ENCODE measurements at regions of chr9 and their contacts with region 1.

Region 1: GRCh38 chr9:130461218-130461630 is 16.5 kb downstream of the ASS1 start:
- DNase-seq: peak; percentile 25 to 79 (median 62)
- ATAC-seq: peak; percentile 75
- H3K4me3 ChIP-seq: no peak overlapping the region
- H3K4me3 Mint-ChIP-seq: no peak overlapping the region
- H3K27ac ChIP-seq: no peak overlapping the region
- H3K27ac Mint-ChIP-seq: no peak overlapping the region
- H3K4me1 ChIP-seq: no peaks in the 10 kb centered on the region
- H3K4me1 Mint-ChIP-seq: peaks cover 0 to 1% (median 0%) of the 10 kb centered on the region in 7 donors
- H3K27me3 ChIP-seq: peaks cover 0 to 4% of the 10 kb centered on the region in 2 donors
- H3K27me3 Mint-ChIP-seq: peaks cover 7 to 33% (median 14%) of the 10 kb centered on the region in 5 donors

Region 2: GRCh38 chr9:129365196-129365595 is 1096.0 kb before region 1 on chr9:
- CTCF ChIA-PET with region 1: no interaction called
- POLR2A ChIA-PET with region 1: no interaction called
- intact Hi-C with region 1: no loop called
- DNase-seq: no peak
- ATAC-seq: no peak
- H3K4me3 ChIP-seq: no peak overlapping the region
- H3K4me3 Mint-ChIP-seq: no peak overlapping the region
- H3K27ac ChIP-seq: no peak overlapping the region
- H3K27ac Mint-ChIP-seq: no peak overlapping the region
- H3K4me1 ChIP-seq: no peaks in the 10 kb centered on the region
- H3K4me1 Mint-ChIP-seq: peaks cover 0 to under 1% (median 0%) of the 10 kb centered on the region in 7 donors
- H3K27me3 ChIP-seq: no peaks in the 10 kb centered on the region
- H3K27me3 Mint-ChIP-seq: peaks cover 0 to 15% (median 0%) of the 10 kb centered on the region in 5 donors

Region 3: DNA sequence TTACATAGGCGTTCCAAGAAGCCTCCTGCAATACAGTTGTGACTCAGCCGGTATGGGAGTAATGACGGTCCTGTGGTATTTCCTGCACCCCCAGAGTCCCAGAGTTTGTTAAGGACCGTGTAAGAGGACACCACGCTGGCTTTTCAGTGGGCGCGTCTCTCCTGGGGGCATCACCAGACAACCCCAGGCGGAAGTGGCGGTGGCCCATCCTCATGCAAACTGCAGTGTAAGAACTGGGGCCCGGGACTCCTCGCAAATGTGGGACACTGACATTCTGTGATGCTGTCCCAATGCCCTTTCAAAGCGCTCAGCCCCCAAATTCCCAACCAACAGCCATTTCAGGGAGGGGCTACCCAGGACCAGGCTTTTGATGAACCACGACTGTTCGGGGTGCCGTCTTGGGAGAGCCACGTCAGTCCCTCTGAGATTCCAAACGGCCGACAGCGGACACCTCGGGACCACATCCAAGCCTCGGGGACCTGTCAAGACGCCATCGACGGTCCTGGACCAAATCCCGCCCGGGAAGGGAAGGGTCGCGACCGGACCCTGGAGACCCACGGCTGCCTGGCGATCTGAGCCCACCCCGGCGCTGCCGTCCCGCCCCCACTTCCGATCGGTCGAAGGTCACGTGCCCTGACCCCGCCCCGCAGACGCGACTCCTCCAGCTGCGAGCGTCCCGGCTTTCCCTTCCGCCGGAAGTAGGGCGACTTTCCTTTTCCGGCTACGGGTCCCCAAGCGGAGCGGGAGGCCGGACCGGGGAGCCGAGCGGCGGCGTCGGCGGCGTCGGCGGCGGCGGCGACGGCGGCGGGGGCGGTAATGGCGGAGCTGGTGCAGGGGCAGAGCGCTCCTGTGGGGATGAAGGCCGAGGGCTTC is 117.9 kb after region 1 on chr9 and contains the start of gene FUBP3:
- CTCF ChIA-PET with region 1: no interaction called
- POLR2A ChIA-PET with region 1: no interaction called
- intact Hi-C with region 1: no loop called
- DNase-seq: peak; percentile 63 to 93 (median 78)
- ATAC-seq: peak; percentile 92
- H3K4me3 ChIP-seq: peak within 1 kb of the TSS; percentile 99
- H3K4me3 Mint-ChIP-seq: peak within 1 kb of the TSS; percentile 87 to 97 (median 92)
- H3K27ac ChIP-seq: peak within 1 kb of the TSS; percentile 85
- H3K27ac Mint-ChIP-seq: peak within 1 kb of the TSS; percentile 78 to 98 (median 92)
- H3K4me1 ChIP-seq: peaks cover 6 to 15% of the 10 kb centered on the region in 2 donors
- H3K4me1 Mint-ChIP-seq: peaks cover 22 to 58% (median 54%) of the 10 kb centered on the region in 7 donors
- H3K27me3 ChIP-seq: no peaks in the 10 kb centered on the region
- H3K27me3 Mint-ChIP-seq: peaks cover 0 to 5% (median 0%) of the 10 kb centered on the region in 5 donors
- total RNA-seq, gene FUBP3: 34.3 to 49.6 (median 40.5) TPM

Region 4: GRCh38 chr9:130640681-130641080 is 179.5 kb after region 1 on chr9:
- CTCF ChIA-PET with region 1: no interaction called
- POLR2A ChIA-PET with region 1: no interaction called
- intact Hi-C with region 1: no loop called
- DNase-seq: no peak
- ATAC-seq: no peak
- H3K4me3 ChIP-seq: no peak overlapping the region
- H3K4me3 Mint-ChIP-seq: no peak overlapping the region
- H3K27ac ChIP-seq: no peak overlapping the region
- H3K27ac Mint-ChIP-seq: no peak overlapping the region
- H3K4me1 ChIP-seq: no peaks in the 10 kb centered on the region
- H3K4me1 Mint-ChIP-seq: no peaks in the 10 kb centered on the region
- H3K27me3 ChIP-seq: no peaks in the 10 kb centered on the region
- H3K27me3 Mint-ChIP-seq: no peaks in the 10 kb centered on the region

Region 5: DNA sequence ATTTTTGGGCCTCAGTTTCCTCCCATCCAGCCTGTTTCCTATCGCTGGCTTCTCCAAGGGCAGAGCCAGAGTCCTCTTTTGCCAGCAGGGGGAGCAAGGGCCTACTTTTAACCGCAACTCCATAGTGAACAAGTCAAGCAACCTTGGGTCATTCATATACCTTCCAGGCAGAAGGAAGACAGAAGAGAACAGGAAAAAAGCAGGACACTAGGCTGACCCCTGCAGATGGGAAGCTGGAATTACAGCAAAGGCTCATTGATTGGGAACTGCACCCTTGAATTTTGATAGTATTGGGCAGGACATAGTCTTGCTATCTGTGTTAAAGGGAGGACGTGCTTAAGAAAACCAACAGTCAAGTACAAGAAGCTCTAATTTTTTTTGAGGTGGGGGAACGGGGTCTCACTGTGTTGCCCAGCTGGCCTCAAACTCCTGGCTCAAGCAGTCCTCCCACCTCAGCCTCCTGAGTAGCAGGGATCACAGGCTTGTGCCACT is 405.3 kb after region 1 on chr9:
- CTCF ChIA-PET with region 1: interaction called, 5 read pairs
- POLR2A ChIA-PET with region 1: no interaction called
- intact Hi-C with region 1: loop called in 1 of 2 experiments (anchors 2 kb)
- DNase-seq: peak; percentile 8 to 54 (median 40)
- ATAC-seq: peak; percentile 56
- H3K4me3 ChIP-seq: no peak overlapping the region
- H3K4me3 Mint-ChIP-seq: no peak overlapping the region
- H3K27ac ChIP-seq: no peak overlapping the region
- H3K27ac Mint-ChIP-seq: no peak overlapping the region
- H3K4me1 ChIP-seq: no peaks in the 10 kb centered on the region
- H3K4me1 Mint-ChIP-seq: peaks cover 2 to 9% (median 5%) of the 10 kb centered on the region in 7 donors
- H3K27me3 ChIP-seq: no peaks in the 10 kb centered on the region
- H3K27me3 Mint-ChIP-seq: no peaks in the 10 kb centered on the region

Region 6: DNA sequence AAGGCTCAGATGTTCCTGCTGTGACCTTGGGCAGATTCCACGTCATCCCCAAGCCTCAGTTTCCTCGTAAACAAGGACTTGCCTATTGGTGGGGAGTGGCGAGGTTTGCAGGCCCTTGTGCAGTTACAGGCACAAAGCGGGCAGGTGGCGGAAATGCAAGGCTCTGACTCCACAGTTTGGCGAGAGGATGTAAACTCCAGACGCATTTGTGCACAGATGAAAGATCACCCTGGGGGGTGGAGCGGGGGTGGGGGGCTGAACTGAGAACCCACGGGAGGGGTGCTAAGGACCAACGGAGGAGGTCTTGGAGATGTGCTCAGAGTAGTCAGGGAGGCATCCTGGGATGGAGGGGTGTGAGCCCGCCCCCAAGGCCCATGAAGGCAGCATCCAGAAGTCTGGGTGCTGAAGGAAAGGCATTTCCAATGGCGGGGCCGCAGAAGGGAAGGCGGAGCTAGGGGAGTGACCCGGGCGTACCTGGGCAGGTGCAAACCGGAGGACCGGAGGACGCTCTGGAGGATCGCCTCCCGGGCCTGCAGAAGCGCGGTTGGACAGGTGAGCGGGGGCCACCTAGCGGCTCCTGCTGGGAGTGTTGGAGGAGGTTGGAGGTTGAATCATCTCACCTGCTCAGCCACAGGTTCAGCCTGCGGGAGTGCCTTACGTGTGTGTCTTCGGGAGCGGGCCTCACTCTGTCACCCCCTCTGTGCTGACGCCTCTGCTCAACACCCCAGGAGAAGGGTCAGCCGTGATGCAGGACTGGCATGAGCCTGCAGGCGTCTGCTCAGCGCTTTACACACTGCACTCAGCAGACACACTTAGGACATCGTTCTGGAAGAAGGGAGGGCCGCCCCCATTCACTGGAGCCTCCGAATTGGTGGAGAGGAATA is 479.7 kb after region 1 on chr9:
- CTCF ChIA-PET with region 1: no interaction called
- POLR2A ChIA-PET with region 1: no interaction called
- intact Hi-C with region 1: loop called in 1 of 2 experiments (anchors 1 kb)
- DNase-seq: peak; percentile 30 to 78 (median 56)
- ATAC-seq: peak; percentile 83
- H3K4me3 ChIP-seq: no peak overlapping the region
- H3K4me3 Mint-ChIP-seq: peak overlapping the region in 8 of 10 donors; percentile 10 to 62 (median 52)
- H3K27ac ChIP-seq: no peak overlapping the region
- H3K27ac Mint-ChIP-seq: peak overlapping the region in 1 of 9 donors; percentile 52
- H3K4me1 ChIP-seq: no peaks in the 10 kb centered on the region
- H3K4me1 Mint-ChIP-seq: peaks cover 0 to 15% (median 10%) of the 10 kb centered on the region in 7 donors
- H3K27me3 ChIP-seq: peaks cover 0 to 2% of the 10 kb centered on the region in 2 donors
- H3K27me3 Mint-ChIP-seq: peaks cover 34 to 71% (median 58%) of the 10 kb centered on the region in 5 donors